PC-9 (cell line): ENCODE measurements at regions of chr4 and their contacts with region 1.

Region 1: GRCh38 chr4:151250706-151251105 is 26.3 kb upstream of the PRSS48 start:
- DNase-seq: no peak
- H3K4me3 ChIP-seq: no peak overlapping the region
- H3K27ac ChIP-seq: no peak overlapping the region
- H3K4me1 ChIP-seq: no peaks in the 10 kb centered on the region
- H3K27me3 ChIP-seq: no peaks in the 10 kb centered on the region
- CTCF ChIP-seq: no peak

Region 2: GRCh38 chr4:151091081-151091480 is 159.6 kb before region 1 on chr4:
- CTCF ChIA-PET with region 1: no interaction called
- POLR2A ChIA-PET with region 1: no interaction called
- intact Hi-C with region 1: no loop called
- DNase-seq: no peak
- H3K4me3 ChIP-seq: no peak overlapping the region
- H3K27ac ChIP-seq: no peak overlapping the region
- H3K4me1 ChIP-seq: no peaks in the 10 kb centered on the region
- H3K27me3 ChIP-seq: no peaks in the 10 kb centered on the region
- CTCF ChIP-seq: no peak

Region 3: GRCh38 chr4:151204925-151205524 is 45.7 kb before region 1 on chr4:
- CTCF ChIA-PET with region 1: no interaction called
- POLR2A ChIA-PET with region 1: interaction called, 11 read pairs
- intact Hi-C with region 1: no loop called
- DNase-seq: no peak
- H3K4me3 ChIP-seq: no peak overlapping the region
- H3K27ac ChIP-seq: no peak overlapping the region
- H3K4me1 ChIP-seq: no peaks in the 10 kb centered on the region
- H3K27me3 ChIP-seq: no peaks in the 10 kb centered on the region
- CTCF ChIP-seq: no peak

Region 4: GRCh38 chr4:151227731-151228130 is 23.0 kb before region 1 on chr4:
- CTCF ChIA-PET with region 1: no interaction called
- POLR2A ChIA-PET with region 1: interaction called, 12 read pairs
- intact Hi-C with region 1: no loop called
- DNase-seq: peak in 1 of 2 experiments; percentile 11
- H3K4me3 ChIP-seq: no peak overlapping the region
- H3K27ac ChIP-seq: no peak overlapping the region
- H3K4me1 ChIP-seq: peaks cover 6% of the 10 kb centered on the region
- H3K27me3 ChIP-seq: no peaks in the 10 kb centered on the region
- CTCF ChIP-seq: no peak